ENCODE measurements at regions of chr15 and their contacts with region 1.

Region 1: DNA sequence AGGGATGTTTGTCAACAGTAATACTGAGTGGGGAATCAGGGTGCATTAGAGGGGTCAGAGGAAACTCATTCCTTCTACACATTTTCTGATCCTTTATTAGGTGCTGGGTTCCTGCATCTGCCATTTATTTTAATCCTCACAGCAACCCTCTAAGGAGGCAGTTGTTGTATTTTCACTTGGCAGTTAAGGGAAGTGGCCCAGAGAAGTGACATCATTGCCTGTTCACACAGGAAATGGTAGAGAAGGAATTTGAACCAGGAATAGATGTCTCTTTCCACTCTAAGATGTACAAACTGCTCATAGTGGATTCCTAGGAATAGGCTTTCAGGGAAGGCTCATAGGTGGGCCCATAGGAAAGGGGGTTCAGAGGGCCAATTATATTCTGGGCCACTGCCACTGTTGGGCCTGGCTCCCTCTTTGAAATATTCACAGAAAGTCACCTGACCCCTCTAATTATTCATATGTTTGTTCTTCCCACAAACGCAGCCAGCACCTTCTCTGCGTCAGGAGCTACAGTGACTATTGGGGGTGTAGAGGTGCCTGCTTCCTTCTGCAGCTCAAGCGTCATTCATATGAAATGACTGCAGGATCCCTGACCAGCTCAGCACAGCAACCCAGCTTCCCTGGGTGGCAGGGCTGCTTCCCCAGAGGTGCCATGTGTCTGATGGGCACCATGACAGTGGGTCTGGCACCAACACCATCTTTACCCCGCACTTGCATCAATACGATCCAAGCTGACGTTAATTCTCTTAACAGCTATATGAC is 163.9 kb upstream of the SMAD3 start:
- DNase-seq: no peak
- H3K4me3 ChIP-seq: no peak overlapping the region
- H3K27ac ChIP-seq: no peak overlapping the region
- H3K4me1 ChIP-seq: no peaks in the 10 kb centered on the region
- CTCF ChIP-seq: no peak

Region 2: GRCh38 chr15:66679657-66680108 is 221.8 kb before region 1 on chr15:
- CTCF ChIA-PET with region 1: no interaction called
- POLR2A ChIA-PET with region 1: no interaction called
- intact Hi-C with region 1: no loop called
- DNase-seq: no peak
- H3K4me3 ChIP-seq: no peak overlapping the region
- H3K27ac ChIP-seq: no peak overlapping the region
- H3K4me1 ChIP-seq: peaks cover 20% of the 10 kb centered on the region
- CTCF ChIP-seq: no peak

Region 3: DNA sequence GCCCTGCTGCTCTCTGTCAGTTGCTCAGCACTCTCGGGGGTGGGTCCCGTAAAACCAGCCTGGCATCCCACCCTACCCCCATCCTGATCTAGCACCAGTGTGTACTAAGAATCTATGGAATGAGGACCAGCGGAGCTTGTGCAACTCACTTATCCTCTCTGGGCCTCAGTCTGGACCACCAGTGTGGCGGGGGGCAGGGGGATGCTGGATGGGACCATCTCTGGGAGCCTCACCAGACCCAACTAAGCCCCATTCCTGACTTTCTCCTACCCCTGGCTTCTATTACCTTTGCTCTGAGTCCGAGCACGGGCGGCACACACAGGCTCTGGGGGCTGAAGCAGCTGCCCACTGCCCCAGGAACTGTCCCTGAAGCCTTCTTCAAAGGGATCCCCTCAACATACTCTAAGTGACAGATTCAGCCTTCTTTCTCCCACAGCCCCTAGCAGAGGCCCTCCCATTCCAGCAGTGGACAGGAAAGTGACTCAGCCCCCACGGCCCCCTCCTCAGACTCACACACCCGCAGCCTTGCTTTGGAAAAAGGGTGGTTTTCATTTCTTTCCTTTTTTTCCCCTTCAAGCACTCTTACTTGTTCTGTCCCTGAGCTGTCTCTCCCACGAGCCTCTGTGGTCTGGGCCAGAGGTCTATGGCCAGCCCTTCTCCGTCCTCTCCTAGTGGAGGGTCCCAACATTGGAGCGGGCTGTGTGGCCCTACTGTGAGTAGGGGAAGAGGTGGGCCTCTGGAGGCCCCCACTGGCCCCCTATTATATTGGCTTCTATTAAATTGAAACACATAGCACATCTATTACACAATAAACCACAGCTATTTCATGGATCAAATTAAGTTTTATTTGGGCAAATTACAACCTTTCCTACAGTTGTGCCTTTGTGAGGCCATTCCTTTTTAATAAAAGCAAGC is 99.2 kb before region 1 on chr15:
- CTCF ChIA-PET with region 1: no interaction called
- POLR2A ChIA-PET with region 1: no interaction called
- intact Hi-C with region 1: no loop called
- DNase-seq: no peak
- H3K4me3 ChIP-seq: no peak overlapping the region
- H3K27ac ChIP-seq: no peak overlapping the region
- H3K4me1 ChIP-seq: no peaks in the 10 kb centered on the region
- CTCF ChIP-seq: no peak

Region 4: DNA sequence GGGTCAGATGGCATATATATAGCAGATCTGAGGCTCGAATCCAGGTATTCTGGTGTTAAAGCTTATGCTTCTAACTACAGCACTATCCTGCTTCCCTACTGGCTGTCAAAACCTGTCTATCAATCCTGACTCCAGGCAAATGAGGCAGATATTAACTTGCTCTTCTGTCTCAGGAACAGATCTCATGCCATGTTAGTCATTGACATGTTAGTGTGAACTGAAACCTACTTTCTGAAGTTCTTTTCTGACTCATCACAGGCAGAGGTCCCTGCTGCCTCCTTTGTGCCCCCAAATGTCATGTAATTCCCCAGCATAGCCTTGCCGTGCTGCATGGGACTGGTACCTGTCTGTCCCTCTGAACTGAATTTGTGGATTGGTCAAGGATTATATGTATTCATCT is 38.9 kb after region 1 on chr15:
- CTCF ChIA-PET with region 1: no interaction called
- POLR2A ChIA-PET with region 1: no interaction called
- intact Hi-C with region 1: loop called (anchors 5 kb)
- DNase-seq: no peak
- H3K4me3 ChIP-seq: no peak overlapping the region
- H3K27ac ChIP-seq: no peak overlapping the region
- H3K4me1 ChIP-seq: peaks cover 35% of the 10 kb centered on the region
- CTCF ChIP-seq: no peak

Region 5: DNA sequence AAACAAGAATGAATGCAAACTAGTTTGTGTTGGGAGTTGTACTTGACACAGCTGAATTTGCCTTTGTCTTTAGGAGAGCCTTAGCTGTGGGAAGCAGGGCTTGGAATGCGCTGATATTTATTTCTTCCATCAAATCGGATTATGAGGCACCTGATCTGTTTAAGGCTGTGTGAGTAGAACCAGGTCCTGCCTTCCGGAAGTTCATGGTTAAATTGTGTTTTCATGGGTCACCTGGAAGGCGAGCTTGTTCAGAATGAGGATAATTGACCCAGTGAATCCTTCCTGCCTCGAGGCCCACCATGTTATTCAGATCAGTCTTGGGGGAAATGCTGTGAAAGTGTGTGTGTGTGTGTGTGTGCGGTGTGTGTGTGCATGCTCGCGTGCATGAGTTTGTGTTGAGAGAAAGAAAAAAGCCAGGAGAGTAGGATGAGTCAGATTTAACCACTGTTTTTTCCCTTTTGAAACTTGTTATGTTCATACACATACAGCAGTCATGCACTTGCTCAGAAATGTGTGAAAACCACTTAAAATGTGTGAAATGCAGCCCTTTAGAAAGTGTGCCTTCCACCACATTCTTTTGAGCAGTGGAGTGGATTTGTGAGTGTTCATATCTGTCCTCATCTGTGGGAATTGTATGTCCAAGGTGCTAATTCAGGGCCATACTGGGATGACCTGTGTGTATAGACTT is 200.5 kb after region 1 on chr15:
- CTCF ChIA-PET with region 1: no interaction called
- POLR2A ChIA-PET with region 1: no interaction called
- intact Hi-C with region 1: no loop called
- DNase-seq: no peak
- H3K4me3 ChIP-seq: peak overlapping the region; percentile 62
- H3K27ac ChIP-seq: peak overlapping the region; percentile 98
- H3K4me1 ChIP-seq: peaks cover 99% of the 10 kb centered on the region
- CTCF ChIP-seq: no peak